Left colon (tissue), 2 donors: ENCODE measurements at regions of chr9 and their contacts with region 1.

Region 1: DNA sequence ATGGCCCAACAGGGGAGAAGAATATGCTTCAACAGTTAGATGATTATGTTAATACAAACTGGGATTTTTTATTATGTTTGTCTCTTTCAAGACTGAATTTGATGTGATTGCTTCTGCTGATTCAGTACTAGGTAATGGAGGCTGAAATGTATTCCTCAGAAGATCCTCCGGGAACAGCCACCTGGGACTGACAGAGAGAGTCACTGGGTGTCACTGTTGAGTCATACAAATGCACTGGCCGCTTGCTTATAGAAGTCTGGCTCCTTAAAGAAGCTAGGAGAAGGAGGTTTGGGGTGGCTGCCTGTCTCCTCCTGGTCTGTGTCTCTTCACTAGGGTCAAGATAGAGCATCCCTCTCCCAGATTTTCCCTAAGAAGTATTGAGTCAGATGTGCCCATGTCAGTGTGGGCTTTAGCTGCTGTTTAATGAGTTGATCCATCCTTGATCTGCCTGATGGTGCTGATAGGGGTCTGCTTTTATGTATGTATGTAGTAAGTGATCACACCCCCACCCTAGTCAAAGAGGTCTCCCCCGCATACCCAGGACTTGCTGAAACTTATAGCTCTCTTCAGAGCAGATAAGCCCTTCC is 773.4 kb downstream of the BRINP1 start:
- DNase-seq: no peak
- ATAC-seq: peak; percentile 34

Region 2: GRCh38 chr9:118418887-118419565 is 176.8 kb before region 1 on chr9:
- intact Hi-C with region 1: no loop called
- DNase-seq: peak; percentile 10 to 25
- ATAC-seq: peak; percentile 83

Region 3: GRCh38 chr9:118463419-118463818 is 132.4 kb before region 1 on chr9:
- intact Hi-C with region 1: no loop called
- DNase-seq: no peak
- ATAC-seq: no peak

Region 4: GRCh38 chr9:119289740-119290433 is 694.1 kb after region 1 on chr9:
- intact Hi-C with region 1: loop called in 1 of 2 experiments (anchors 10 kb)
- DNase-seq: peak in 1 of 2 donors; percentile 58
- ATAC-seq: peak; percentile 57